Natural killer cell (primary cell): ENCODE measurements at regions of chr7 and their contacts with region 1.

Region 1: GRCh38 chr7:70693686-70694360 is 438.1 kb upstream of the GALNT17 start:
- DNase-seq: peak; percentile 70 to 83
- ATAC-seq: peak; percentile 73 to 88 (median 81)
- H3K4me3 ChIP-seq: peak overlapping the region; percentile 11
- H3K4me3 Mint-ChIP-seq: peak overlapping the region; percentile 86
- H3K27ac ChIP-seq: peak overlapping the region; percentile 4
- H3K27ac Mint-ChIP-seq: peak overlapping the region; percentile 63 to 84
- H3K4me1 ChIP-seq: peaks cover 18% of the 10 kb centered on the region
- H3K4me1 Mint-ChIP-seq: peaks cover 41 to 47% of the 10 kb centered on the region in 2 donors
- H3K27me3 ChIP-seq: no peaks in the 10 kb centered on the region
- H3K27me3 Mint-ChIP-seq: no peaks in the 10 kb centered on the region
- CTCF ChIP-seq: no peak

Region 2: GRCh38 chr7:70060298-70061068 is 633.3 kb before region 1 on chr7:
- intact Hi-C with region 1: loop called (anchors 10 kb)
- DNase-seq: peak; percentile 28 to 34
- ATAC-seq: peak; percentile 79 to 91 (median 90)
- H3K4me3 ChIP-seq: no peak overlapping the region
- H3K4me3 Mint-ChIP-seq: peak overlapping the region; percentile 70
- H3K27ac ChIP-seq: no peak overlapping the region
- H3K27ac Mint-ChIP-seq: peak overlapping the region; percentile 63 to 73
- H3K4me1 ChIP-seq: peaks cover 18% of the 10 kb centered on the region
- H3K4me1 Mint-ChIP-seq: peaks cover 48 to 50% of the 10 kb centered on the region in 2 donors
- H3K27me3 ChIP-seq: no peaks in the 10 kb centered on the region
- H3K27me3 Mint-ChIP-seq: peaks cover 6 to 13% of the 10 kb centered on the region in 2 donors
- CTCF ChIP-seq: no peak

Region 3: GRCh38 chr7:70193514-70193913 is 500.3 kb before region 1 on chr7:
- intact Hi-C with region 1: loop called (anchors 5 kb)
- DNase-seq: peak in 1 of 2 donors; percentile 33
- ATAC-seq: no peak
- H3K4me3 ChIP-seq: no peak overlapping the region
- H3K4me3 Mint-ChIP-seq: no peak overlapping the region
- H3K27ac ChIP-seq: no peak overlapping the region
- H3K27ac Mint-ChIP-seq: no peak overlapping the region
- H3K4me1 ChIP-seq: no peaks in the 10 kb centered on the region
- H3K4me1 Mint-ChIP-seq: no peaks in the 10 kb centered on the region
- H3K27me3 ChIP-seq: no peaks in the 10 kb centered on the region
- H3K27me3 Mint-ChIP-seq: no peaks in the 10 kb centered on the region
- CTCF ChIP-seq: no peak

Region 4: GRCh38 chr7:70419526-70420380 is 274.1 kb before region 1 on chr7:
- intact Hi-C with region 1: loop called (anchors 5 kb)
- DNase-seq: no peak
- ATAC-seq: no peak
- H3K4me3 ChIP-seq: no peak overlapping the region
- H3K4me3 Mint-ChIP-seq: no peak overlapping the region
- H3K27ac ChIP-seq: no peak overlapping the region
- H3K27ac Mint-ChIP-seq: no peak overlapping the region
- H3K4me1 ChIP-seq: no peaks in the 10 kb centered on the region
- H3K4me1 Mint-ChIP-seq: no peaks in the 10 kb centered on the region
- H3K27me3 ChIP-seq: no peaks in the 10 kb centered on the region
- H3K27me3 Mint-ChIP-seq: no peaks in the 10 kb centered on the region
- CTCF ChIP-seq: no peak

Region 5: DNA sequence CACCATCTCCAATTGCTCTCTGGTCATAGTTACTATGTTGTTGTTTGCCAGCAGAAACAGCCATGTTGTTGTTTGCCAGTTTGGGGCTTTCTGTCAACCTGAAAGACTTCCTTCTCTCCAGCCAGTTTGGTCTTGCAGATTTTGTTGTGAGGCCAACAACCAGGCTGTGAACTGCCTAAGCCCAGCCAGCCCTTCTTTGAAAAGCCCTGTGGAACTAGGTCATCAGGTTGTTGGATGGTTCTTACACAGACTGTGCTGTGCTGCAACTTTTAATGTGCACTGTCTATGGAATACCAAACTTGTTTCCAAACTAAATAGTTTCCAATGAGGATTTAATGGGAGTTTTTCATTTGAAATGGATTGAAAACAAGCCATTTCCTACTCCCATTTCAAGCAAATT is 154.6 kb before region 1 on chr7:
- intact Hi-C with region 1: loop called (anchors 5 kb)
- DNase-seq: no peak
- ATAC-seq: no peak
- H3K4me3 ChIP-seq: no peak overlapping the region
- H3K4me3 Mint-ChIP-seq: no peak overlapping the region
- H3K27ac ChIP-seq: no peak overlapping the region
- H3K27ac Mint-ChIP-seq: no peak overlapping the region
- H3K4me1 ChIP-seq: no peaks in the 10 kb centered on the region
- H3K4me1 Mint-ChIP-seq: peaks cover 0 to 5% of the 10 kb centered on the region in 2 donors
- H3K27me3 ChIP-seq: no peaks in the 10 kb centered on the region
- H3K27me3 Mint-ChIP-seq: no peaks in the 10 kb centered on the region
- CTCF ChIP-seq: no peak

Region 6: DNA sequence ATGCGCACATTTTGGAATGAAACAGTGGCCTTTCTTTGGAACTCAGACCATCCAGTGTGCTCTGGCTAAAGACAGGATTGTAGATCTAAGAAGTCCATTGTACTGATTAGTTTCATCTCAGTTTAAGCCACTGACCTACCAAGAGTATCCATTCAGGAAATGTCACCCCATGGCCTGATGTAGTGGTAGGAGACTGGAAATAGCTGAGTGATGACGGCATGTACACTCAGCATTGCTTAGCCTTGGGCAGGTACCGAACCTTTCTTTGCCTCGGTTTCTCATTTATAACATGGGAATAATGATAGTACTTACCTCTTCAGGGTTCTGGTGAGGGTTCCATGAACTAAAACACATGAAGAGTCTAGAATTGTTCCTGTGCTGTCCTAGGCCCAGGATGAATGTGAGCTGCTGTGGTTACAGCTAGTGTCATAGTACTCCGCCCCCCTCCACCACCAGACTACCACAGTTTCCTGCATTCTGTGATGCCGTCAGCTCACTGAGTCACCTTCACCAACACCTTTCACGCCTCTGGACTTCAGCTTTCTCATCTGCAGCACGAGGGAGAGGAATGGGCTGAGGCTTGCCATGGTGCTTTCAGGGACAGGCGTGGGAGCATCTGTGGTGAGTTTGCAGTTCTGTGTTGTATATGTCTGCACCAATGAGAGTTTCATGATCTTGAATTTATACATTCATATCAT is 45.9 kb before region 1 on chr7:
- intact Hi-C with region 1: loop called (anchors 1 kb)
- DNase-seq: peak; percentile 83 to 93
- ATAC-seq: peak; percentile 81 to 92 (median 90)
- H3K4me3 ChIP-seq: no peak overlapping the region
- H3K4me3 Mint-ChIP-seq: peak overlapping the region; percentile 84
- H3K27ac ChIP-seq: peak overlapping the region; percentile 84
- H3K27ac Mint-ChIP-seq: peak overlapping the region; percentile 89 to 96
- H3K4me1 ChIP-seq: peaks cover 50% of the 10 kb centered on the region
- H3K4me1 Mint-ChIP-seq: peaks cover 50 to 55% of the 10 kb centered on the region in 2 donors
- H3K27me3 ChIP-seq: no peaks in the 10 kb centered on the region
- H3K27me3 Mint-ChIP-seq: no peaks in the 10 kb centered on the region
- CTCF ChIP-seq: no peak

Region 7: DNA sequence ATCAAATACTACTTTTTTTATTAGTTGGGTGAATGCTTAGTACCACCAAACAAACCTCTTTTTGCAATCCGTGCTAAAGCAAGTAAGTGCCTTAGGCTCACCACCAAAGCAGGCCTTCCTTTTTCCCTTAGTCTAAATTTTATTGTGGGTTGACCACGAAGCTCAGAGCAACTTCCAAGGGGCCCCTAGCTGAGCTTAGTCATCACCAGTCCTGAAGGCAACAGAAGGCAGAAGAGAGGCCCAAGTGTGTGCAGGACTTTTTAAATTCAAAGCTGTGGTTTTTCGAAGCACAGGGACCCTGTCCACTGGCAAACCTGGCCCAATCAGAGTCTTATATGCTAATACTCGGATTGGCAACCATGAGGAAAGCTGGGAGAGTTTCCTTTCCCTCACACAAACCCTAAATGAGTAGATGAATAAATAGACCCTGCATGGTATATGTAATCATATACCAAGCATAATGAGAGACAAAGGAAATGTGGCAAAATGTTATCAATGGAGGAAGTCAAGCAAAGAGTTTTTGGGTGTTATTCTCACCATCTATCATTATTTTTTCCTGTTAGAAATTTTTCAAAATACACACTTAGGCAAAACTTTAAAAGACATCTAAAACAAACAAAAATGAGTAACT is 15.1 kb before region 1 on chr7:
- intact Hi-C with region 1: loop called (anchors 2 kb)
- DNase-seq: peak in 1 of 2 donors; percentile 26
- ATAC-seq: peak in 1 of 3 donors; percentile 15
- H3K4me3 ChIP-seq: no peak overlapping the region
- H3K4me3 Mint-ChIP-seq: peak overlapping the region; percentile 85
- H3K27ac ChIP-seq: peak overlapping the region; percentile 79
- H3K27ac Mint-ChIP-seq: peak overlapping the region; percentile 89 to 95
- H3K4me1 ChIP-seq: peaks cover 47% of the 10 kb centered on the region
- H3K4me1 Mint-ChIP-seq: peaks cover 70 to 84% of the 10 kb centered on the region in 2 donors
- H3K27me3 ChIP-seq: no peaks in the 10 kb centered on the region
- H3K27me3 Mint-ChIP-seq: no peaks in the 10 kb centered on the region
- CTCF ChIP-seq: no peak